Astrocyte of the cerebellum (primary cell): ENCODE measurements at regions of chr2 and their contacts with region 1.

Region 1: DNA sequence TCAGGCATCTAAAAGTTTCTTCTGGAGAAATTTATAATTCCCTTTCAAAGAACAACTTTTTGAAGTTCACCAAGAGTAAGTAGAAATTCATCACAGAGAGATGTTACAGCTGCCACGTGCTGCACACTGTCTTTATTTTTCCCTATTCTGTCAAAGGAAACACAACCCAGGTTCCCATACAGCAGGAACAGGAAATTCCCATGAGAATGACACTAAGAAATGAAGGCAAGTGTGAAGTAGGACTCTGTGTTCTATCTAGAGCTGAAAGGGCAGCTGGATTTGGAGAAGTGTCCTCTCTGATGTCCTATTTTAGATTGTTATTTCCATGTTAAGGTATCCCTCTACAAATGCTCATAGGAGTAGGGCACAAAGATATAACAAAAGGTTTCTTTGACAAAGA is 58.8 kb downstream of the PID1 start:
- DNase-seq: no peak
- H3K4me3 ChIP-seq: no peak overlapping the region
- CTCF ChIP-seq: no peak

Region 2: GRCh38 chr2:228699400-228699799 is 512.8 kb before region 1 on chr2:
- in situ Hi-C with region 1: no loop called
- DNase-seq: no peak
- H3K4me3 ChIP-seq: no peak overlapping the region
- CTCF ChIP-seq: peak; percentile 20

Region 3: DNA sequence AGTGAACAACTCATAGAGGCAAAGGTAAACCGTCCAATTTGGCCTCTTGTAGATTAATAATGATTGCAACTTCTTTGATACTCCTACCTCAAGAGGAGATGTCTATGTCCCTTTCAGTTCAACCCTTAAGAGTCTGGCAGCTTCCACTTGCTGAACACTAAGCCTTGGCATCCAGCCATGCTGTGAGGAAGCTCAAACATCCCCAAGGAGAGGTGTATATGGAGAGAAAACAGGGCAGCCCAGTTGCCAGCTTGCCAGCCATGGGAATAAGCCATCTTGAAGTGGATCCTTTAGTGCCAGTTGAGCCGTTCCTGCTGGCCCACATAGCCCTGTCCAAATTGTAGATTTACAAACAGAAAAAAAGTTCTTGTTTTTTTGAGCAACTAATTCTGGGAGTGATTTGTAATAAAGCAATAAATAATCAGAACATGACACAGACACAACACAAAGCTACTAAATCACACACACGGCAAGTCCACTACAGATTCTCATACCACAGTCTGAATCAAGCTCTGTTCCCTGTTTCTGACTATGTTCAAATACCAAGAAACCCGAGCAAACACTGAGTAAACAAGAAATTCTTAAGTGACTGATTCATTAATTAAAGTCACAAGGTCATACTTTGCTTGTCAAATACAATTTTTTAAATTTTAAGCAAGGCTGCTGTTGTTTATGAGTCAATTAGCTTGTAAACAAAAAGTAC is 37.3 kb before region 1 on chr2:
- in situ Hi-C with region 1: loop called (anchors 5 kb)
- DNase-seq: no peak
- H3K4me3 ChIP-seq: no peak overlapping the region
- CTCF ChIP-seq: no peak